Spleen (tissue), 13 donors: ENCODE measurements at regions of chr15 and their contacts with region 1.

Region 1: GRCh38 chr15:100918034-100918689 is 995 bp upstream of the LRRK1 start:
- DNase-seq: peak; percentile 97
- H3K4me3 ChIP-seq: peak overlapping the region; percentile 63 to 82 (median 73)
- H3K27ac ChIP-seq: peak overlapping the region in 7 of 8 donors; percentile 60 to 88 (median 86)
- H3K4me1 ChIP-seq: peaks cover 20 to 68% (median 54%) of the 10 kb centered on the region in 6 donors
- H3K27me3 ChIP-seq: peaks cover 0 to 27% (median 0%) of the 10 kb centered on the region in 7 donors
- CTCF ChIP-seq: peak; percentile 88 to 98 (median 96)
- POLR2A ChIP-seq: no peak

Region 2: GRCh38 chr15:101008158-101009139 is 90.3 kb after region 1 on chr15:
- intact Hi-C with region 1: loop called (anchors 2 kb)
- DNase-seq: peak; percentile 97
- H3K4me3 ChIP-seq: peak overlapping the region; percentile 36 to 74 (median 47)
- H3K27ac ChIP-seq: peak overlapping the region in 5 of 8 donors; percentile 51 to 66 (median 55)
- H3K4me1 ChIP-seq: peaks cover 11 to 26% (median 22%) of the 10 kb centered on the region in 6 donors
- H3K27me3 ChIP-seq: no peaks in the 10 kb centered on the region
- CTCF ChIP-seq: peak; percentile 84 to 98 (median 96)
- POLR2A ChIP-seq: no peak

Region 3: DNA sequence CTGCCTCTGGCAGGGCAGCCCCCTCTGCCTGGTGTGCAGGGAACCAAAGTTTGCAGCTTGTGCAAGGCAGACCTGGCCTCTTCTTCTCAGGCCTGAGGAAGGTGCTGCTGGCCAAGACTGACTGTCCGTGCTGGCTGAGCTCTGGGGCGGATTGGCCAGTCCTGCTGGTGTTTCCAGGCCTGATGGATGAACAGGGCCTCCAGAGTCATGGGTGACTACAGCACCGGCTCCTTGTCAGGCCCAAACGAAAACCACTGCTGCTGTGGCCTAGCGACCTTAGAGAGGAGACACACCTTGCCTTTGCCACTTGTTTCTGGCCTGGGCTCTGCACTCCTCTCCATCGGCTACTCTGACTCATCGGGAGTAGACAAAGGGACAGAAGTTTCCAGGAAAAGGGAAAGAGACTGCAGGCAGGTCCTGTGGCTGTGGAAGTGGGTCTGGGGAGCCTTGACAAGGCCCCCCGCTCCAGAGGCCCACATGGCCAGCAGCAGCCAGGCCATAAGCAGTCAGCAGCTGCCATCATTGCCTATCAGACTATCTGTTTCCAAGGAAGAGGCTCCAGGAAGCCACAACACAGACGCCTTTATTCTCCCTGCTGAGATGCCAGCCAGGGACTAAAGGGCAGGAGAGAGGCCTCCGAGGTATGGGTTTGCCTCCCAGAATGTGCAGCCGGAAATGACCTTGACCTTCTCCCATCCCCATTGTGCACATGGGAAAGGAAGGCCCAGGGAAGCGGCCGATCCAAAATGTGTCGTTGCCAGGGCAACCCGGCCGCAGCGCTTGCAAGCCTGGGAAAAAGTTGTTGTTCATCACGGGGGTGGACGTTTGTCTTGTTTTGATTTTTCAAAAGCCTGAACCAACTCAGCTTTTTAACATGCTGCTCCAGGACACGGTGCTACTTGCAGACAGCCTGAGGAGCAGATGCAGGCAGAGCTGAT is 173.2 kb after region 1 on chr15:
- intact Hi-C with region 1: no loop called
- DNase-seq: no peak
- H3K4me3 ChIP-seq: no peak overlapping the region
- H3K27ac ChIP-seq: peak overlapping the region in 7 of 8 donors; percentile 53 to 87 (median 79)
- H3K4me1 ChIP-seq: peaks cover 14 to 60% (median 43%) of the 10 kb centered on the region in 6 donors
- H3K27me3 ChIP-seq: no peaks in the 10 kb centered on the region
- CTCF ChIP-seq: no peak
- POLR2A ChIP-seq: no peak